ENCODE measurements at regions of chr7 and their contacts with region 1.

Region 1: GRCh38 chr7:32479574-32480200 is 10.5 kb downstream of the LSM5 start:
- DNase-seq: peak; percentile 66
- H3K4me3 ChIP-seq: no peak overlapping the region
- H3K27ac ChIP-seq: no peak overlapping the region
- H3K4me1 ChIP-seq: peaks cover 0 to 14% of the 10 kb centered on the region in 2 experiments; a peak in 2 of 4 replicates
- H3K27me3 ChIP-seq: no peaks in the 10 kb centered on the region
- CTCF ChIP-seq: peak; percentile 97
- EP300 ChIP-seq: no peak
- RAD21 ChIP-seq: peak; percentile 98

Region 2: DNA sequence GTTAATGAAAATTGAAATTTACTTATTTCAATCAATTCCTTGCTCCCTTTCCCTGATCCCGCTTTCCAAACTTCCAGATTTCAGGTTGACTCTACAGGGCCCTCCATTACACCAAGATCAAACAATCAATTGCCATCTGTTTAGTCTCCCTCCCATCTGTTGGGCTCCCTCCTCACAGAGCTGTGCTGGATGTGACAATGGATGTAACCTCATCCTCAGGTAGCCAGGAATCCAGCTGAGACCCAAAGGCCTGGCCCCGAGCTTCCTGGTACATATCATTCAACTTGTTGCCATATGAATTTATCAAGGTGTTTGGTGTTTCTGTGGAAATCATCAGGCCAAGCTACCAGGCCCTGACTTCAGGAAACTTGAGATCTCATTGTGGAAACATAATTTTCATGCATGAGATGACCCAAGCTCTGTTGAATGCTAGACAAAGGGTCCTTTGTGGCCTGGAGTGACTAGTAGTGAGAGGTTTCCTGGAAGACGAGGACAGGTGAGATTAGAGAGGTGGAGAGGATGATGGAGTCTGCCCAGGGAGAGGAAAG is 260.9 kb before region 1 on chr7:
- CTCF ChIA-PET with region 1: interaction called, 163 read pairs
- POLR2A ChIA-PET with region 1: no interaction called
- DNase-seq: no peak
- H3K4me3 ChIP-seq: no peak overlapping the region
- H3K27ac ChIP-seq: no peak overlapping the region
- H3K4me1 ChIP-seq: no peaks in the 10 kb centered on the region
- H3K27me3 ChIP-seq: peaks cover 53% of the 10 kb centered on the region
- CTCF ChIP-seq: no peak
- EP300 ChIP-seq: no peak
- RAD21 ChIP-seq: no peak

Region 3: DNA sequence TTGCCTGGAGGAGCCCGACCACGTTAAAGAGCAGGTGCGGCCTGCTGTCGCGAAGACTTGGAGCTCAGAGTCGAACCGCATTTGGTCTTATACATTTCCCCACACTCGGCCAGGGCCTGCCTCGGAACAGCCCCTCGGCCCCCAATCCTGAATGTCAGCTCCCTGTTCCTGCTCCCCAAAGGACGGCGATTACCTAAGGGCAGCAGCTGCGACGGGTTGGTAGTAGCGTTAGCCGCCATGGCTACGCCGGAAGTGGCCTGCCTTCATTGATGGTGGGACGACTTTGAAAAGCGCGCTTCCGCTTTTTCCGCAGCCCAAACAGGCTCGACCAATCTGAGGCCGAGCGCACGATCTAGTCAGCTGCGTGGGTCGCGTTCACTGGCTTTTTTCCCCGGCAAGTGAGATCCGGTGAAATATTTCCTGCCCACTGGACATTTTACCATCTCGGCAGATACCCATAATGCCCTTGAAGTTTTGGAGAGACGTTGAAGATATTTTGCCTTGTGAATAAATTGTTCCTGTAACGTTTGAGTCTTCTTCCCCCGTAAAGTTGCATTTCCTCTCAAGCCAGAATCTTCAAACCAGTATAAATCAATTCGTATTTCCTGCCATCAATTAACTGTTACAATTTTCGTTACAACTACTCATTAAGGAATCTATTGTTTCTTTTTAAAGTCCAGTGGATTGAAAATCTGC is 10.6 kb after region 1 on chr7 and contains the start of gene LSM5:
- CTCF ChIA-PET with region 1: interaction called, 29 read pairs
- POLR2A ChIA-PET with region 1: no interaction called
- DNase-seq: peak; percentile 84
- H3K4me3 ChIP-seq: peak within 1 kb of the TSS; percentile 83 to 85
- H3K27ac ChIP-seq: peak within 1 kb of the TSS; percentile 87 to 96
- H3K4me1 ChIP-seq: peaks cover 0 to 8% of the 10 kb centered on the region in 2 experiments; a peak in 2 of 4 replicates
- H3K27me3 ChIP-seq: no peaks in the 10 kb centered on the region
- CTCF ChIP-seq: no peak
- EP300 ChIP-seq: peak; percentile 33 to 42; a peak in 2 of 4 replicates
- RAD21 ChIP-seq: no peak
- polyA plus RNA-seq, gene LSM5: 21.2 and 22.2 TPM in 2 replicates

Measured in SK-N-SH (cell line).